ENCODE measurements at regions of chr1 and their contacts with region 1.

Region 1: DNA sequence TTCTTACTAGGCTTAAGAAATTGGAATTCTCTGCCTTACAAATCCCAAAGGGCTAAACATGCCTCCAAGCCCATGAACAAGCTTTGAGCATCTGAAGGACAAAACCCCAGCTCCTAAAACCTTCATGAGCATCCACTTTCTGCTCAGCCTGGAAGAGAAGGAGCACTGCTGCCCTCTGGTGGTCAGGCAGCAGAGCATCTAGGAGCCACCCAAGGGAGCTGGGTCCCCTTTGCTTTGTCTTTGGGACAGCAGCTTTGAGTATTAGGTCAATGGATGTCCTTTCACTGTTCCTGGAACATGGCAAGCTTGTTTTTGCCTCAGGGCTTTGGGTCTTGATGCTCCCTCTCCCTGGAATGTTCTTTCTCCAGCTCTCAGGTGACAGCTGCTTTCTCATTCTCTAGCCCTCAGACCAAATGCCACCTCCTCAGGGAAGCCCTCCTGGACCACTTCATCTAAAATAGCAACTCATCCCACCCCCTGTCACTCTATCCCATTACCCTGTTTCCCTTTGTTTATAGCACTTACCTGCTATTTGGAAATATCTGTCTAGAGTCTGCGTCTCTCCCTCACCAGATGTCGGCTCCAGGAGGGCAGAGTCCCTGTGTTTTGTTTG is 25.7 kb downstream of the RAB7B start:
- DNase-seq: peak; percentile 88

Region 2: DNA sequence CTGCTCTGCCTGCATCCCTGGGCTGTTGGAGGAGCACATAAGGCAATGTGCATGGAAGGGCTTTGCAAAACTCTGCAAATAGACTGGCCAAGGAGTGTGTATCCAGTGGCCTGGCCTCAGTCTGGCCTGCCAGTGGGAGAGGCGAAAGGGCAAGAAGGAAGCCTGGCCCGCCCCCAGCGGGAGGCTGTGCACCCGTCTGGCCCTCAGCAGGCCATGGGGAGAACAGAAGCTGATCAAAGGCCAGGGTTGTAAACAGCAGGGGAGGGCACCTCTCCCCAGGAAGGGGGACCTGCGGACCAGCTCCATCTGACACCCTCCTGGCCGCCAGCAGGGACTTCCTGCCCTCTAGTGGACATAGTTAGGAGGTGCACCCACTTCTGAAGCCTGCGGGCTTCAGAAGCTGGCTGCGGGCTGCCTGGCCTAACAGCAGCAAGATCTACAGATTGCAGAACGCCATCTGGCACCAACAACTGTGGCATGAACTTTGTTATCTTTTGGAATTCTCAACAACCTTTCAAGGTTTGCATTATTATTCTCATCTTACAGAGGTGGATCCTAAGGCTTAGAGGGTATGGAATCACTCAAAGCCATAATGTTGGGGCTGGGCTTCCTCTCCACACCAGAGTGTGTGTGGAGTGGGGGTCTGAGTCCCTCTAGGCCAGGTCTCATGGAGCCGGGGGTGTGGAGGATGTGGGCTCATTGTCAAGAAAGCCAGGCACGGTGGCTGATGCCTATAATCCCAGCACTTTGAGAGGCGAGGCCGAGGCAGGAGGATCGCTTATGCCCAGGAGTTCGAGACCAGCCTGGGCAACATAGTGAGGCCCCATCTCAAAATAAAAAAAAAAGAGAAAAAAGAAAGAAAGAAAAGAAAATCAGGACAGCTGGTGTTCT is 491.9 kb before region 1 on chr1:
- intact Hi-C with region 1: no loop called
- DNase-seq: peak; percentile 86

Region 3: GRCh38 chr1:205791568-205792180 is 185.8 kb before region 1 on chr1:
- intact Hi-C with region 1: loop called (anchors 5 kb)
- DNase-seq: no peak

Region 4: DNA sequence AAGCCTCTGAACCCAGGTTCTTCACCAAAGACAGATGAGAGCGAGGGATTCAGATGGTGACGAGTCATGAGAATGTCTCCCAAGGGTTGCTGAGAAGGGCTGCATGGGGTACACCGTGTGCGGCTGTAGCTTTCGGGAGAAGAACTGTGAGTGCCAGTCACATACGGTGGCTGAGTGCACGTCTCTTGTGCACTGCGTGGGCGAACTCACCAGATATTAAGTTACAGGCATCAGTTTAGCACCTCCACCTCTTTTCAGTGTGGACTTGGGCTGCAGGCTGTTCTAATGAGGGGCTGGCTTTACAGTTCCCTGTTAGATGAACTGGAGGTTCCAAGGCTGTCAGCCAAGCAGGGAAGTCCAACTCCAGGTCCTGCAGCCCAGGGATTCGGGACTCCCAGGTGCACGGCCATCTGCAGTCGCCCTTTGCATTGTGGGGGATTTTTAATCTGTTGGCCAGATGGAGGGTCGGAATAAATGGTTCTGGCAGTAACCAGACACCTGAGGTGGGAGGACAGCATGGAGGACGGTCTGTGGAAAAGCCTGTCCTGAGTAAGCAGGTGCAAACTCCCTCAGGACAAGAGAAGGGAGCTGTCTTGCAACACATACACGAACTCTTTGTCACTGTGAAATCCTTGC is 166.1 kb after region 1 on chr1:
- intact Hi-C with region 1: no loop called
- DNase-seq: no peak

Region 5: GRCh38 chr1:207058878-207059867 is 1081.7 kb after region 1 on chr1:
- intact Hi-C with region 1: loop called in 1 of 2 experiments (anchors 5 kb)
- DNase-seq: no peak

Measured in posterior vena cava (tissue), 2 donors.